ENCODE measurements at regions of chr19 and their contacts with region 1.

Region 1: DNA sequence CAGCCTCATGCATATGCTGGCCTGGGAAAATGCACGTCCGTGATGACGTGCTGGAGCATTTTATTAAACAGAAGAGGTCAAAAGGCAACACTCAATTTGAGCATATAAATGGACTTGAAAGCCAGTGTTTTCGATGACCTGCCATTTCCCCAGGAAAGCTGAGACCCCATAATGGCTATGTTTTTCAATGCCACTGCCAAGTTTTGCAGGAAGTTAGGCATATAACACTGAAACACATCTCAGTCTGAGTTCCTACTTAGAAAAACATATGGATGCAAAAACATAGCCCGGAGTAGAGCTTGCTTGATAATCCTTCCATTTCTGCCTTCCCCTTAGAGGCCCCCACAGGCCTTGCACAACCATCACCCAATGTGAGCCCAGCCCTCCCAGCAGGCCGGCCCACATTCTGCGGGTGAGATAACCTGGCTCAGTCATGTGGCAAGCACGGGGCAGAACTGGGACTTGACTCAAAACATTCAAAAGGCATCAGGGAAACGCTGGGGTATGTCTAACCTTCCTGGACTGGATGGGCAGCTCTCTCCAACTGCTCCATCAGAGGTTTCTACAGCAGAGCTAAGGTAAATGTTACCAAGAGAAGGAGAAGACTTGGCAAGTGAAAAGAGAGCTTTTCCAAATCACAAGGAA is 24.9 kb downstream of the EPS15L1 start:
- DNase-seq: peak; percentile 94

Region 2: DNA sequence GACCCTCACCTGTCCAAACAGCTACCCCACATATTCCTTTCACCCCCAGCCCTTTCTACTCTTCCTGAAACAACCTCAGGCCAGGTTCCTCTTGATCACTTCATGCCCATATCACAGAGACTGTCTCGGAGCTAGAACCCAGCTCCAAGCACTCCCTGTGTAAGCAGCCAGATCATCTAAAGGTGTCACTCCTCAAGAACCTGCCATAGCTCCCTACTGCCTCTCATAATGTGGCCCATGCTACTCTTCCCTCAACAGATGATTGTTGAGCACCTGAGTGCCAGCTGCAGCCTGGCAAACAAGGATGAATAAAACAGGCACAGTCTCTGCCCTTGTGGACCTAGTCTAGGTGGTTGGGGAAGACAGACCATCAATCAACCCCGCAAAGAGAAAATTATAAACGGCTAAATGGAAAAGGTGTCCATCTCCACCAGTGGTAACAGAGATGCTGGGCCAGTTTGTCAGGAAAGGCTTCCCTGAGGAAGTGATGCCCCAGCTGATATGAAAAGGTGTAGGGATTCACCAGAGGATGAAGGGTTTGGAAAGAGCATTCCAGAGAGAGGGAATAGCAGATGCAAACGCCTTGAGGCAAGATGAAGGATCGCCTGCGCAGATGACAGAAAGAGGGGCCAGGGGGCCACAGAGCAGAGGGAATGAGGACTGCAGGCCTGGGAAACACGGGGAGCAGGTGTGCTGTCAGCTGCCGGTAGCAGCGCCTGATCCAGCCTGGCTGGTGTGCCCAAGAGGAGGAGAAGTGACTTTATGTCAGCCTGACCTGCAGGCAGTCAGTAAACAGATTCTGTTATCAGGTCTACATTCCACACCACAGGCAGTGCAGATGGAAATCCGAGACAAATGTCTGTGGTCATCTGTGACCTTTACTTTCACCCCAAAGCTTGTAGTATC is 16.8 kb after region 1 on chr19:
- intact Hi-C with region 1: loop called (anchors 2 kb)
- DNase-seq: no peak